ENCODE measurements at regions of chr13 and their contacts with region 1.

Region 1: GRCh38 chr13:49247643-49248621 is at the start of gene CDADC1:
- DNase-seq: peak; percentile 100
- total RNA-seq, gene CDADC1: 10.5 to 10.9 TPM

Region 2: DNA sequence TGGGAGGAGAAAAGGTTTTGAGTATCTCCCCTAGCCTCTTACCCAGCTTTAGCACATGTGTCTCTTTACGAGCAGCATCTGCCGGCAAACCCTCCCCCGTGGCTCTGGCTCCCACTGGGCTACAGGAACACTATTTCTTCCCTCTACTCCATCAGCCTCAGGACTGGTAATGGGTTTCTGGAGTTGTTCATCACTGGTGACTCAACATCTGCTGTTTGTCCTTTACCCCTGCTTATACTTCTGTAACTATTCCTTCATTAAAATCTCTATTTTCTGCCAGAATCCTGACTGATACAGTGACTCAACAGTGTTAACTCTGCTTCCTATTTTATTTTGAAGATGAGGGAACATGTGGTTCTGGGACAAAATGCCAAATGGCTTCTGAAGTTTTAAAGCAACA is 1913.8 kb before region 1 on chr13:
- intact Hi-C with region 1: no loop called
- DNase-seq: peak; percentile 80

Region 3: GRCh38 chr13:49213997-49214916 is 33.7 kb before region 1 on chr13:
- intact Hi-C with region 1: loop called in 1 of 2 experiments (anchors 1 kb)
- DNase-seq: no peak

Measured in posterior vena cava (tissue), 2 donors.